ENCODE measurements at regions of chr17 and their contacts with region 1.

Region 1: DNA sequence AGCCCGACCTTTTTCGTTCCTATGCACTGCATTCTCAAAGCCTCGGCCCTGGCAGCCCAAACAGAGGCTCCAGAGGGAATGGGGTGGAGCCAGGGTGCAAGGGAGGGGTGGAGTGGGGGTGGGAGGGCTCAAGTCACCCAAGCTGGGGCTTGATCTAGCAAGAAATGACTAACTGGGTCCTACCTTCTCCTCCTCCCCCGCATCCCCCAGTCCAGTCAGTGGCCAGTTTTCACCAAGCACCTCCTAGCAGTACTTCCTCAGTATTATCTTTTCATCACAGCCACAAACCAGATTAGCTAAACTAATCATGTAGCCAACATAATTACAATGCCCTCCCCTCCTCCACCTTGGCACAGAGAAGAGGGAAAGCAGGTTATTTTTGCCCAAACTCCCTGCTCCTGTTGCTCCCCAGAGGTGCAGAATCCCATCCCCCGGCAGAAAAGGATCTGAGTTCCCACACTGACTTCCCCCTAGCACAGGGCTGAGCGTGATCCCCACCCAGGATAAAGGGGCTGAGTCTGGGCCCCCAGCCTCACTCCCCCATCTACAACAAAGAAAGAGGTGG is 2.2 kb downstream of the JUP start:
- DNase-seq: no peak
- H3K4me3 ChIP-seq: no peak overlapping the region
- H3K4me3 Mint-ChIP-seq: peak overlapping the region in 4 of 7 donors; percentile 45 to 68 (median 58)
- H3K27ac ChIP-seq: peak overlapping the region; percentile 47
- H3K27ac Mint-ChIP-seq: no peak overlapping the region
- H3K4me1 ChIP-seq: peaks cover 16% of the 10 kb centered on the region
- H3K4me1 Mint-ChIP-seq: peaks cover 9 to 34% (median 14%) of the 10 kb centered on the region in 3 donors
- H3K27me3 ChIP-seq: peaks cover 15% of the 10 kb centered on the region
- H3K27me3 Mint-ChIP-seq: peaks cover 22 to 43% of the 10 kb centered on the region in 2 donors

Region 2: DNA sequence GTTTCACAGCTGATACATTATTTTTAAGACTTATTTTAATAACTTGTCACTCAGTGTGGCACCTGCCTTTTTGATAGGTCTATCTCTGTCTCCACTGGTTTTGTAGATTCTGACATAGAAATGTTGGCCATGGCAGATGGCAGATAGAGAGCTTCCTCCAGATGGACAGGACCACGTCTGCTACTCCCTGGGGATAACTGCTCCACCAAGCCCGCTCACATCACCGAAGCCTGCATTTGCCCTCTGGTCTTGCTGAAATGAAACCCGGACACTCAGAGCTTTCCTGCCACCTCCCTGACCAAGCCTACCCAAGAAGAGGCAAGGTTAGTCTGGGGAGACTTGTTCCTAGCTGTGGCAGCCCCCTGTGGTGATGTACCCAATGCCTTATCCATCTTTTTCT is 33.4 kb before region 1 on chr17:
- CTCF ChIA-PET with region 1: no interaction called
- POLR2A ChIA-PET with region 1: interaction called, 15 read pairs
- DNase-seq: no peak
- H3K4me3 ChIP-seq: no peak overlapping the region
- H3K4me3 Mint-ChIP-seq: no peak overlapping the region
- H3K27ac ChIP-seq: no peak overlapping the region
- H3K27ac Mint-ChIP-seq: peak overlapping the region in 2 of 8 donors; percentile 10 to 38
- H3K4me1 ChIP-seq: no peaks in the 10 kb centered on the region
- H3K4me1 Mint-ChIP-seq: no peaks in the 10 kb centered on the region
- H3K27me3 ChIP-seq: no peaks in the 10 kb centered on the region
- H3K27me3 Mint-ChIP-seq: peaks cover 6 to 17% of the 10 kb centered on the region in 2 donors

Region 3: DNA sequence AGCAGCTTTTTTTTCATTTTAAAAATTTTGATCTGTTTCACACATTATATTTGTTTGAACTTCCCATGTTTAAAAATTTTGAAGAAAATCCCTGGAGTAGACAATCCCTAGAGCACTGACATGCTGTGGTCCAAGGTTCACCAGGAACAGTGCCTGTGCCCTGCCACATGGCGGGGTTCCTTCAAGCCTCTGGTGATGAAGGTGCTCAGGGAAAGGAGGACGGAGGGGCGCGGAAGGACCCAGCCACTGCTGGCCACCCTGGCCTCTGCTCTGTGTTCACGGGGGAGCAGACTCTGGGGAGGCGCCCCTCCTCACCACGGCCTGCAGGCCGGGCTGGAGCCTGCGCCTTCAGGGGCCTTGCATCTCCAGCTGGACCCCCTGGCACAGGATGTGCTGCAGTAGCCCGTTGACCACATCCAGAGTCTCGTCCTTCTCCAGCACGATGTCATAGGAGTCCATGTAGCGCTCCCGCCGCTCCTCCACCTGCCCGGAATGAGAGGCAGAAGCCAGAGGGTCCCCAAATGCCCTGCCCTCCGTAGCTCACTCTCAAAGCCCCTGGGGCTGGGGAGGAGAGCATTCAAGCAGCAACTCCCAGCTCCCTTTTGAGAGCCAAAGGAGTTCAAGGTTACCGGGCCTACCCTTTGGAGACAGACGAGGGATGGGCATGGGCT is 41.0 kb after region 1 on chr17:
- CTCF ChIA-PET with region 1: no interaction called
- POLR2A ChIA-PET with region 1: no interaction called
- DNase-seq: no peak
- H3K4me3 ChIP-seq: no peak overlapping the region
- H3K4me3 Mint-ChIP-seq: peak overlapping the region in 1 of 7 donors; percentile 23
- H3K27ac ChIP-seq: no peak overlapping the region
- H3K27ac Mint-ChIP-seq: peak overlapping the region in 1 of 8 donors; percentile 78
- H3K4me1 ChIP-seq: no peaks in the 10 kb centered on the region
- H3K4me1 Mint-ChIP-seq: no peaks in the 10 kb centered on the region
- H3K27me3 ChIP-seq: no peaks in the 10 kb centered on the region
- H3K27me3 Mint-ChIP-seq: peaks cover 0 to 1% of the 10 kb centered on the region in 2 donors

Measured in CD8-positive, alpha-beta memory T cell (primary cell).